PC-3 (cell line): ENCODE measurements at regions of chr2 and their contacts with region 1.

Region 1: DNA sequence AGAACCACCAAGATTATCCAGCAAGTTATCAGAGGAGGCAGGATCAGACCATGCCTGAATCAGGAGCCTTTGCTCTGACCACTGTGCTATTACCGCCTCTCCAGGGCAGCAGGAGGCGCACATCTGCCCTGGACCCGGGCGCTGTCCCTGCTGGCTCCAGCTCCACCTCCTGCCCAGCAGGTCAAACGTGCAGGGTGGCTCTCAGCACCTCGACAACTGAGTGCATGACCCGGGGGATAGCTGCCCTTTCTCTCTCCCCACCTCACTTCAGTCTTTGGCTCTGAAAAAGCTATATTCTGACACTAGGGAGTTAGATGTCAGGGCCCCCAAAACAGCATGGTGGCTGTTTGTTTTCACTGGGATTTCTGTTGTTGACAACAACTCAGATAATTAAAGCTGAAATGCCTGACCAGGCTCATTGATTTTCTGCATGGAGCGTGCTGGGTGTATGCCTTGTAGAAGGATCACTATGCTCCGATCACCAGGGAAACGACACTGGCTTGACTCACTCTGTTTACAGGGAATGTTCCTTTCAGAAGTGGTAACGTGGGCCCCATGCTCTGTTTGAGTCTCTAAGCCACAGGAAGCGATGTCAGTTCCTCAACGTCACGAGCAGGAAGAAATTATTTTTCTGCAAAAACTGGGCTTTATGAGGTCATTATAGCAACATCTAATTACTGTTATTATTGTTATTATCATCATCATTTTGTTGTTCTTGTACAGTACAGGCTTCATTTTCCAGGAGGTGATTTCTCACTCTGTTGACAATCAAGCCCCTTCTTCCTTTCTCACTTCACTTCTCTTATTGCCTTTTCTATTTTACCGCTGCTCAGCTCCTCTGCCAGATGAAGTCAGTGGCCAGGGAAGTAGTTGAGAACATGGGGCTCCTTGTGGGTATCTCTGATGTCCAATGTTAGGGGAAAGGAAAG is 125.6 kb downstream of the PLB1 start:
- DNase-seq: peak; percentile 92
- ATAC-seq: peak; percentile 98
- H3K4me3 ChIP-seq: peak overlapping the region; percentile 11; the same call in 1 of the 2 replicates
- H3K27ac ChIP-seq: peak overlapping the region; percentile 87
- H3K4me1 ChIP-seq: peaks cover 51% of the 10 kb centered on the region
- H3K27me3 ChIP-seq: no peaks in the 10 kb centered on the region
- CTCF ChIP-seq: peak; percentile 80

Region 2: GRCh38 chr2:28643911-28644334 is 22.5 kb after region 1 on chr2:
- CTCF ChIA-PET with region 1: interaction called, 11 read pairs
- POLR2A ChIA-PET with region 1: no interaction called
- intact Hi-C with region 1: loop called (anchors 2 kb)
- DNase-seq: peak; percentile 96
- ATAC-seq: peak; percentile 92
- H3K4me3 ChIP-seq: peak overlapping the region; percentile 28; the same call in 1 of the 2 replicates
- H3K27ac ChIP-seq: peak overlapping the region; percentile 96
- H3K4me1 ChIP-seq: peaks cover 68% of the 10 kb centered on the region
- H3K27me3 ChIP-seq: no peaks in the 10 kb centered on the region
- CTCF ChIP-seq: no peak

Region 3: GRCh38 chr2:28649481-28650214 is 28.2 kb after region 1 on chr2:
- CTCF ChIA-PET with region 1: interaction called, 4 read pairs
- POLR2A ChIA-PET with region 1: interaction called, 3 read pairs
- intact Hi-C with region 1: loop called (anchors 2 kb)
- DNase-seq: peak; percentile 84
- ATAC-seq: peak; percentile 89
- H3K4me3 ChIP-seq: no peak overlapping the region
- H3K27ac ChIP-seq: peak overlapping the region; percentile 91
- H3K4me1 ChIP-seq: peaks cover 59% of the 10 kb centered on the region
- H3K27me3 ChIP-seq: no peaks in the 10 kb centered on the region
- CTCF ChIP-seq: no peak

Region 4: DNA sequence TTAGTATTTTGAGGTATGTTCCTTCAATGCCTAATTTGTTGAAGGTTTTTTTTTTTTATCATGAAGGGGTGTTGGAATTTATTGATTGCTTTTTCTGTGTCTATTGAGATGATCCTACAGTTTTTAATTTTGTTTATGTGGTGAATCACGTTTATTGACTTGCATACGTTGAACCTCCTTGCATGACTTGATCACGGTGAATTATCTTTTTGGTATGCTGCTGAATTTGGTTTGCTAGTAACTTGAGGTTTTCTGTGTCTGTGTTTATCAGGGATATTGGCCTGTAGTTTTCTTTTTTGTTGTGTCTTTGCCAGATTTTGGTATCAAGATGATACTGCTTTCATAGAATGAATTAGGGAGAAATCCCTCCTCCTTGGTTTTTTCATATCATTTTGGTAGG is 517.7 kb after region 1 on chr2:
- CTCF ChIA-PET with region 1: no interaction called
- POLR2A ChIA-PET with region 1: no interaction called
- intact Hi-C with region 1: no loop called
- DNase-seq: peak; percentile 77
- ATAC-seq: peak; percentile 71
- H3K4me3 ChIP-seq: peak overlapping the region; percentile 46
- H3K27ac ChIP-seq: peak overlapping the region; percentile 58
- H3K4me1 ChIP-seq: peaks cover 17% of the 10 kb centered on the region
- H3K27me3 ChIP-seq: no peaks in the 10 kb centered on the region
- CTCF ChIP-seq: no peak